Activated T-helper 2 cell treated with anti-CD3 and anti-CD28 coated beads, Interferon-gamma antibody, Interleukin-2, Interleukin-4, amounts not matched to agents 10 μg/mL and 5 μg/mL and 100 μg/mL, durations not matched to agents 14 hours and 24 hours and 36 hours (primary cell): ENCODE measurements at regions of chr5 and their contacts with region 1.

Region 1: GRCh38 chr5:39547553-39548154 is 122.9 kb upstream of the DAB2 start:
- DNase-seq: no peak
- H3K4me3 Mint-ChIP-seq: no peak overlapping the region
- H3K27ac Mint-ChIP-seq: no peak overlapping the region
- H3K4me1 Mint-ChIP-seq: peaks cover 4% of the 10 kb centered on the region
- H3K27me3 Mint-ChIP-seq: peaks cover 2% of the 10 kb centered on the region

Region 2: DNA sequence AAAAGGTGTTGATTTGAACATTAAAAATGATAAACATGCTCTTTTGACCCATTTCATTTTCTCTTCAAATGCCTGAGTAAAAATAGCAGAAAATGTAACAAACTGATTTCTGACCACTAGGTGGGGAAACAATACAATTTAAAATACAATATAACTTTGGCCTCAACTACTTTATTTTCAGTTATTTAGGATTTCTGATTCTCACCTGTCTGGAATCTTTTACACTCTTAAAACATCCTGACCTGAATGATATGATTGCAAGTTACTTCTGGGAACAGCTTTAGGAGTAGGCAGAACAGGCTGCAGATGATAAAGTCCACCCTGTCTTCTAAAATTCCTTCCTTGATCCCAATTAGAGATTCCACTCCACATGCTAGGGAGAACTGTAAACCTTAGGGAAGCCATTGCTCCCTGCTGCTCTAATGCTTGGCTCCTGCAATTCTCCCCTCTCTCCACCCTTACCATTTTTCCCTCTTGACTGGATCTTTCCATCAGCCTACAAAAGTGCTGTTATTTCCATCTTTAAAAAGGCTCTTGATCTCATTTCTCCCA is 398.6 kb before region 1 on chr5:
- intact Hi-C with region 1: loop called (anchors 10 kb)
- DNase-seq: no peak
- H3K4me3 Mint-ChIP-seq: no peak overlapping the region
- H3K27ac Mint-ChIP-seq: peak overlapping the region; percentile 52
- H3K4me1 Mint-ChIP-seq: peaks cover 42% of the 10 kb centered on the region
- H3K27me3 Mint-ChIP-seq: no peaks in the 10 kb centered on the region

Region 3: GRCh38 chr5:39376293-39376714 is 171.3 kb before region 1 on chr5:
- intact Hi-C with region 1: loop called (anchors 1 kb)
- DNase-seq: no peak
- H3K4me3 Mint-ChIP-seq: no peak overlapping the region
- H3K27ac Mint-ChIP-seq: no peak overlapping the region
- H3K4me1 Mint-ChIP-seq: no peaks in the 10 kb centered on the region
- H3K27me3 Mint-ChIP-seq: peaks cover 10% of the 10 kb centered on the region

Region 4: GRCh38 chr5:39424736-39425637 is 122.7 kb before region 1 on chr5 and contains the start of gene DAB2:
- intact Hi-C with region 1: loop called (anchors 5 kb)
- DNase-seq: peak; percentile 16
- H3K4me3 Mint-ChIP-seq: peak within 1 kb of the TSS; percentile 63
- H3K27ac Mint-ChIP-seq: no peak within 1 kb of the TSS
- H3K4me1 Mint-ChIP-seq: peaks cover 6% of the 10 kb centered on the region
- H3K27me3 Mint-ChIP-seq: peaks cover 58% of the 10 kb centered on the region
- total RNA-seq, gene DAB2: not detected in 2 replicates